ENCODE measurements at regions of chr11 and their contacts with region 1.

Region 1: DNA sequence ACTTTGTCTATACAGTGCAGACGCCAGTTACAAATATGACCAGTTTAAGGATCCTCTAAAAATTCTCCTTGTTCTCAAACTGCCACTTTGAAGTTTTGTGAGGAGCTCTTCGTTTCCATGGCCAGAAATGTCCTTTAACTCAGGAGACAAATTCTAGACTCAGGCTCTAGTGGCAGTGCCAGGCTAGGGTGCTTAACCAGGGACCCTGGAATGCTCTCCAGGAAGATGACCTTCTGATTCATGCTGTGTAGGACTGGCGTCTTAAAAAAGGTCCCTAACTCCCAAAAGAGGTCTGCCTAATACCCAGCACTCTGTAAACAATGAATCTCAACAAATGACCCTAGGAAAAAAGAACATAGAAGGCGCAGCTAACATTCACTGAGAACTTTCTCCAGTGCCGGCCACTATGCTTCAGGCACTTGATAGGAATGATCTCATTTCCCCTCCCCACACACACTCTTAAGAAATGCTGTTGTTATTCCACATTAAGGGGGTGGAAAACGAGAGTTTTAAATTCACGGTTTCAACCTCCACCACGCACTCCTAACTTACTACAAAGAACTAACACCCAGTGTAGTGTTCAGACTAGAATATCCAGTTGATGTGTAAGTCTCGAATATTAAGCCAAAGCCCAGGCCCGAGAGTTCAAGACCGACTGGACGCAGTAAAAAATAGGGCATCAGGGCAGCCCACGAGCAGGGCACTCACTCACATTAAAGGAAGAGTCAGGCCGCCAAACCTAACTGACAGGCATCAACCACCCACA is 747 bp downstream of the NXF1 start:
- DNase-seq: no peak
- H3K4me3 ChIP-seq: peak overlapping the region; percentile 77 to 85
- H3K27ac ChIP-seq: peak overlapping the region; percentile 93
- H3K4me1 ChIP-seq: peaks cover 45% of the 10 kb centered on the region
- H3K27me3 ChIP-seq: no peaks in the 10 kb centered on the region
- CTCF ChIP-seq: no peak
- POLR2A ChIP-seq: no peak

Region 2: DNA sequence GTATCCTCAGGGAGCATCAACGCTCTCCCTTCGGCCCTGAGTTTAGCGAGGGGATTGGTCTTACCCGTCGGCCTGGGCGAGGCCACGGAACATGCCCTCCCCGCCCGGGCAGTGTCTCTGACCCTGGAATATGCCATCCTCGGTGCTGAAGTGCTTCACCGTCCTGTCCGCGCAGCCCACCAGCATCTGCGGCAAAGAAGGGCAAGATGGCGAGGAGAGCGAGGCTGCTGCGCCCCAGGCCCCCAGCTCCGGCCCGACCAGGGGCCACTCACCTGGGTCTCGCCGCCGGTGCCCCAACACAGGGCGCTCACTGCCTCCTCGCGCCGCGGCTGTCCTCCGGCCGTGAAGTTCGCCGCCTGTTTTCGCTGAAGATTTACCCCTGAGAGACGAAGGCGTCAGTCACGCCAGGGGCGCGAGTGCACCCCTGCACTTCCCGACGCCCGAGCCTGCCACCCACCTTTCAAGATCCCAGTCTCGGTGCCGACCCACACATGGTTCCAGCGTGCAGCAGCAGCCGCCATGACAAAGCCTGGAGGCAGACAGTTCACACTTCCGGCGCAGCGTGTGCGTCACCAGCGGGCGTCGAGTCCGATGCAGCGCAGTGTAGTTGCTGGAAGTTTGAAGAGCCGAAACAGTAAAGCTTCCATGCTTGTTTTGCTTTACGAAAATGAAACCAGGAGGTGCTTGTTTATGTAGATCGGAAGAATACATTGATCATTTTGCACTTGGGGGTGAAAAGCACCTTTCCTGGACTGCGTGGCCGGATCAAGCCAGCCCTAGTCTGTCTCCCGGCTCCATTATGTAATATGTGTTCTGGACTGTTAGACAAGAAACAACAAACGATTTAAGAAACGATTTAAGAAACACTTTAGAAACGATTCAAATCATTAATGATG is 34.8 kb after region 1 on chr11 and contains the start of gene WDR74:
- intact Hi-C with region 1: loop called (anchors 5 kb)
- DNase-seq: peak in 1 of 2 donors; percentile 97
- H3K4me3 ChIP-seq: peak within 1 kb of the TSS; percentile 58 to 88
- H3K27ac ChIP-seq: peak within 1 kb of the TSS; percentile 97
- H3K4me1 ChIP-seq: peaks cover 37% of the 10 kb centered on the region
- H3K27me3 ChIP-seq: no peaks in the 10 kb centered on the region
- CTCF ChIP-seq: no peak
- POLR2A ChIP-seq: peak in 1 of 2 donors; percentile 94
- total RNA-seq, gene WDR74: 51.8 TPM

Measured in vagina (tissue), 2 donors.